ENCODE measurements at regions of chr11 and their contacts with region 1.

Region 1: DNA sequence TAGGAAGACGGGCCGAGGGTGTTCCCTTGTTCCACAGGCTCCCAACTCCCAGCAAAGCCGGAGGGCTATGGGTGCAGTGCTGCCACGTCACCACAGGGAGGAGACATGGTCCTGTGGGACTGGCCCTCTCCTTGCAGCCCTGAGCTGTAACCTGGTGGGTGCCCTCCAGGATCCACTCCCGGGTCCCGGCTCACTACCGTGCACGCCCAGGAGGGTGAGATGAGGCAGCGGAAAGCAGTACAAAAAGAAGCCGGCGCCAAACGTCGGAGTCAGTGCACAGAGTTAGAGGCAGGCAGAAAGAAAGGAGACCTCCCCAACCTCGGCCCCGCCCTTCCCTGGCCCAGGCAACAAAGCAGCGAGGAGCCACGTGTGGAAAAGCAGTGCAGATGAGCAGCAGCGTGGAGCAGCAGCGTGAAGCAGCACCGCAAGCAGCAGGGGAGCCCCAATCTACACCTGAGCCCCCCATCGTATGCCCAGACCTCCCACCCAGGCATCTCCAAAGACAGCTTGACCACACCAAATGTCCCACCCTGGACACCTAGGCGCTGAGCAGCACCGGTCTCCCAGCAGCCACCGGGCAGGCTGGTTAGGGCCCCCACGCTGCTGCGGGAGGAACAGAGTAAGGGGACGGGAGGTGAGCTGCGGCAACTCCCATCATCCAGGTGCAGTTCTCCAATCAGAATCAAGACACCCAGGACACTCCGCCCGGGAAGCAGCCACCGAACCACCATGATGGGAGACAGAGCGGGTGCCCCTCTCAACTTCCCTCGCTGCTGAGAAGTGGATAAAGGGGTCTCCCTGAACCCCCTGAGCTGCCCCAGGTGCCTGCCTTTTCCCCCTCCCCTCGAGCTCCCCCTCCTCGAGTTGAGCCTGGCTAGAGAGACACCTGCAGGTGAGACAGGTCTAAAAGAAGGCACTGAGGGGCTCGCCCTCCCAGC is 28.8 kb downstream of the IGSF9B start:
- DNase-seq: peak; percentile 85
- H3K4me3 Mint-ChIP-seq: peak overlapping the region; percentile 64
- H3K27ac Mint-ChIP-seq: peak overlapping the region; percentile 89
- H3K4me1 Mint-ChIP-seq: peaks cover 55% of the 10 kb centered on the region
- H3K27me3 Mint-ChIP-seq: no peaks in the 10 kb centered on the region

Region 2: DNA sequence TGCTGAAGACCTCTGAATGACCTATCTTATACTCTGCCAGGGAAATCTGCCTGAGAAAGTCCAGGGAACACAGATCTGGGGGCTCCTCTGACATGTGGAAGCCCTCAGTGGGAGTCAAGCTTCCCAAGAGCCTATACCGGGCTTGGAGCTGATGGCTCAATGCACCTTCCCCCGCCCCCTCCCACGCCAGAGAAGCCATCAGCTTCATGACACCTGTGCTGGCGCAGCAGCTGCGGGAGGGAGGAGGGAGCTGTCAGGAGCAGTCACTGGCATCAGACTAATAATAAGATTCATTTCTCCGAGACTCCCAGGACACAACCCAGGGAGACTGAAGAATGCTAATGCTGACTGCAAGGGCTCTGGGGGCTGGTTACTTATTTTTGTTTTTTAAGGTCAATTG is 130.4 kb before region 1 on chr11:
- CTCF ChIA-PET with region 1: no interaction called
- DNase-seq: no peak
- H3K4me3 Mint-ChIP-seq: no peak overlapping the region
- H3K27ac Mint-ChIP-seq: no peak overlapping the region
- H3K4me1 Mint-ChIP-seq: no peaks in the 10 kb centered on the region
- H3K27me3 Mint-ChIP-seq: no peaks in the 10 kb centered on the region

Region 3: DNA sequence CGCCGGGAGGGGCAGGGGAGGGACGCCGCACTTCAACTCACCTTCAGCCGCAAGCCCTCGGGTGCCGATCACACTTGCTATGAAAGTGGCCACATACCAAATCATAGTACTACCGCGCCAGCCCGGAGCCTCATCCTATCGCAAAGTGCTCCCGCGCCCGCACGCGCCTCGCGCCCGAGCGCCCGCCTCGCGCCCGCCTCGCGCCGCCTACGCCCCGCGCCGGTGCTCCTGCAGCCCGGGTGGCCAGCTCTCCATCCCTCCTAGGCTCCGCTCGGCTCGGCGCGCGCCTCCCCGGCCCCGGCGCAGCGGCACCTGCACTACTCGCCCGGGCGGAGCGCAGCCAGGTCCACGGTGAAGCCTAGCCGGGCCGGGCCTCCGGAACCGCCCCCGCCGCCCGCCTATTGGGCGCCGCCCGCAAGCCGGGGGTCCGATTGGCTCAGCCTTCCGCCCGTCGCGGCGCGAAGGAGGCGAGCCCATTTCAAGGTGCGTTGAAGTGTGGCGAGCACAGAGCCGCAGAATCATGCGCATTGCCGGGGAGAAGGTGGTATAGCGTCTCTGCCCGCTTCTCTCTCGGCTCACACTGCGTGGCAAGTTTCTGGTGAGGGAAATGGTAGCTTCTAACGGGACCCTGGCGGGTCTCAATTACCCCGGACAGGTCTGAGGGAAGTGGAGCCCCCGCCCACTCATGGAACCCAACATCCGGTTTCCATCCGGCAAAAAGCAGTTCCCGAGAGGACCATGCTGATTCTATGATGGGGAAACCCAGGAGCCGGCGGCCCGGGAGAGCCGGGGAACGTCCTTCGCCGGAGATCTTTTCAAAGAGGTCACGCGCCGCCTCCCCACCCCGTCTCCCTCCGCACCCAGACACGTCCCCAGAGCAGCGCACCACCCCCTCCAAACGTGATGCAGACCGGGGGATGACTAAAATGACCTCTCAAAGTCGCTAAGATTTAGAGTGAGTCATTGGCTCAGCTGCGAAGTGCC is 29.0 kb after region 1 on chr11 and contains the start of gene IGSF9B:
- CTCF ChIA-PET with region 1: interaction called, 17 read pairs
- DNase-seq: peak; percentile 95
- H3K4me3 Mint-ChIP-seq: peak within 1 kb of the TSS; percentile 86
- H3K27ac Mint-ChIP-seq: peak within 1 kb of the TSS; percentile 88
- H3K4me1 Mint-ChIP-seq: peaks cover 51% of the 10 kb centered on the region
- H3K27me3 Mint-ChIP-seq: peaks cover 52% of the 10 kb centered on the region

Region 4: GRCh38 chr11:134050541-134051383 is 122.8 kb after region 1 on chr11:
- CTCF ChIA-PET with region 1: interaction called, 71 read pairs
- DNase-seq: peak; percentile 81
- H3K4me3 Mint-ChIP-seq: peak overlapping the region; percentile 64
- H3K27ac Mint-ChIP-seq: peak overlapping the region; percentile 85
- H3K4me1 Mint-ChIP-seq: peaks cover 17% of the 10 kb centered on the region
- H3K27me3 Mint-ChIP-seq: peaks cover 72% of the 10 kb centered on the region

Region 5: DNA sequence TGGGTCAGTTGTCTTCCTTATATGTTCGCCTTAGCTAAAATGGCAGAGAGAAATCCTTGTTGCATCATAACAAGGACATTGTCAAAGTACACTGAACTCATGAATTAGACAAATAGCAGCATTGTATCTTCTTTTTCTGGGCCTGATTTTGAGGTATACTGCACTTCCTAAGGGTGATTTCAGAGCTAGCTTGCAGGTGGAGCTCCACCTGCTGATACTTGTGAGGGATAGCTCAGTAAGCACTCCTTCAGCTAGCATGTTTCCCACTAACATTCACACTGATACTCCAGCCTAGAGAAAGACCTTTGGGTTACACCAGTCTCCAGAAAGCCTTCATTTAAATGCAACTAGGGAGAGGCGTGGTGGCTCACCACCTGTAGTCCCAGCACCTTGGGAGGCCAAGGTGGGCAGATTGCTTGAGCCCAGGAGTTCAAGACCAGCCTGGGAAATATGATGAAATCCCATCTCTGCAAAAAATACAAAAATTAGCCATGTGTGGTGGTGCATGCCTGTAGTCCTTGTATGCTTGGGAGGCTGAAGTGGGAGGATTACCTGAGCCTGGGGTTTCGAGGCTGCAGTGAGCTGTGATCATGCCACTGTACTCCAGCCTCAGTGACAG is 170.7 kb after region 1 on chr11:
- CTCF ChIA-PET with region 1: interaction called, 19 read pairs
- DNase-seq: no peak
- H3K4me3 Mint-ChIP-seq: no peak overlapping the region
- H3K27ac Mint-ChIP-seq: no peak overlapping the region
- H3K4me1 Mint-ChIP-seq: no peaks in the 10 kb centered on the region
- H3K27me3 Mint-ChIP-seq: no peaks in the 10 kb centered on the region